ENCODE measurements at regions of chr2 and their contacts with region 1.

Region 1: DNA sequence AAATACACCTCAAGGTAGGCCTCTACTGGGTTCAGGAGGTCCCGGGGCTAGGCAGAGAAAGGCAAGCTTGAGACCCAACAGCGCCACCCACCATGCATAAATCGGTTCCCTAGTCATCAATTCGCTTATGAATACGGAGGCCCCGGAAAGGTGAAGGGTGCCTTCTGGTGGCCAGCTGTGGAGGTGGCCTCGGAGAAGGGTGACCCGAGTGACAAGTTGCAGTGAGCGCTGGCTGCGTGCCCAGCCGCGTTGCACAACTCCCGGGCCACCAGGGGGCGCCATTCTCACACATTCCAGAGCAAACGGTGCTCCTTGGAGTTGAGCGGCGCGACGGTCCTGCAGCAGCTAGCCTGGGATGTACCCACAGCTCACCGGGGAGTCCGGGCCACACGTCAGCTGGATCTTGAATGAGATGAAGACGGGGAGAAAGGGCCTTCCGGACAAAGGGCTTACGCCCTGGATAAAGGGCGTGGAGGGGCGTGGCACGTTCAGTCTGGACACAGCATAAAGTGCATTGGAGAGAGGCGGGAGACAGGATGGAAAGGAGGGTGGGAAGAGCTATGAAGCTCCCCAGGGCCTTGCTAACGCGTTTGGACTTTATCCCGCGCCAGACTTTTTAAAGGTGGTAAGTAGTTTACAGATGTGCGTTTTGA is 20.4 kb downstream of the TMSB10 start:
- DNase-seq: peak; percentile 96 to 97 (median 97)
- H3K4me3 ChIP-seq: peak overlapping the region; percentile 73 to 86
- H3K4me3 Mint-ChIP-seq: peak overlapping the region; percentile 90 to 99 (median 95)
- H3K27ac ChIP-seq: peak overlapping the region; percentile 62
- H3K27ac Mint-ChIP-seq: peak overlapping the region; percentile 91 to 99 (median 95)
- H3K4me1 ChIP-seq: peaks cover 40% of the 10 kb centered on the region
- H3K4me1 Mint-ChIP-seq: peaks cover 25 to 48% (median 36%) of the 10 kb centered on the region in 4 donors
- H3K27me3 ChIP-seq: no peaks in the 10 kb centered on the region
- H3K27me3 Mint-ChIP-seq: no peaks in the 10 kb centered on the region

Region 2: GRCh38 chr2:84526562-84526961 is 399.3 kb before region 1 on chr2:
- CTCF ChIA-PET with region 1: interaction called, 26 read pairs
- POLR2A ChIA-PET with region 1: interaction called, 10 read pairs
- intact Hi-C with region 1: loop called (anchors 1 kb)
- DNase-seq: peak in 1 of 5 donors; percentile 12
- H3K4me3 ChIP-seq: no peak overlapping the region
- H3K4me3 Mint-ChIP-seq: peak overlapping the region in 1 of 8 donors; percentile 2
- H3K27ac ChIP-seq: no peak overlapping the region
- H3K27ac Mint-ChIP-seq: peak overlapping the region in 3 of 7 donors; percentile 12 to 55 (median 22)
- H3K4me1 ChIP-seq: peaks cover 10% of the 10 kb centered on the region
- H3K4me1 Mint-ChIP-seq: peaks cover 2 to 24% (median 13%) of the 10 kb centered on the region in 4 donors
- H3K27me3 ChIP-seq: no peaks in the 10 kb centered on the region
- H3K27me3 Mint-ChIP-seq: no peaks in the 10 kb centered on the region

Region 3: GRCh38 chr2:84840306-84840705 is 85.5 kb before region 1 on chr2:
- CTCF ChIA-PET with region 1: interaction called, 7 read pairs
- POLR2A ChIA-PET with region 1: interaction called, 16 read pairs
- intact Hi-C with region 1: no loop called
- DNase-seq: peak in 1 of 5 donors; percentile 10
- H3K4me3 ChIP-seq: peak overlapping the region in 1 of 2 donors; percentile 39
- H3K4me3 Mint-ChIP-seq: peak overlapping the region; percentile 63 to 87 (median 80)
- H3K27ac ChIP-seq: peak overlapping the region; percentile 61
- H3K27ac Mint-ChIP-seq: peak overlapping the region; percentile 92 to 98 (median 96)
- H3K4me1 ChIP-seq: peaks cover 88% of the 10 kb centered on the region
- H3K4me1 Mint-ChIP-seq: peaks cover 74 to 91% (median 84%) of the 10 kb centered on the region in 4 donors
- H3K27me3 ChIP-seq: no peaks in the 10 kb centered on the region
- H3K27me3 Mint-ChIP-seq: no peaks in the 10 kb centered on the region

Region 4: DNA sequence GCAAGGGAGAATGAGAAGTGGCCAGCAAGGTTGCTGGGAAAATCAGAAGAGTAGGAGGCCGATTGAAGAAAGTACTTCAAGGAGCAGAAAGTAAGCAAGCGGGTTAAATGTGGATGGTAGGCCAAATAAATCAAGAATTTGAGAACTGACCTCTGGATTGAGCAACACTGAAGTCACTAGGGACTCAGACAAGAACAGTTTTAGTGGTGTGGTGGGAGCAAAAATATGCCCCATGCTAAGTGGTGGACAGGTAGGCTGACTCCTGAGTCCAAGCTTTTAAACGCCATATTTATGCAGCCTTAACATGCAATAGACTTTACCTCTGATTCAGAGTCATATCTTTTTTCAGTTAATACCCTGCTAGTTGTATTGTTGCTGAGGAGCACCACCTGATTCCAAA is 49.5 kb before region 1 on chr2:
- CTCF ChIA-PET with region 1: interaction called, 271 read pairs
- POLR2A ChIA-PET with region 1: interaction called, 105 read pairs
- intact Hi-C with region 1: no loop called
- DNase-seq: no peak
- H3K4me3 ChIP-seq: no peak overlapping the region
- H3K4me3 Mint-ChIP-seq: peak overlapping the region; percentile 10 to 98 (median 96)
- H3K27ac ChIP-seq: no peak overlapping the region
- H3K27ac Mint-ChIP-seq: peak overlapping the region; percentile 65 to 94 (median 84)
- H3K4me1 ChIP-seq: peaks cover 69% of the 10 kb centered on the region
- H3K4me1 Mint-ChIP-seq: peaks cover 54 to 86% (median 67%) of the 10 kb centered on the region in 4 donors
- H3K27me3 ChIP-seq: no peaks in the 10 kb centered on the region
- H3K27me3 Mint-ChIP-seq: no peaks in the 10 kb centered on the region

Region 5: GRCh38 chr2:84912984-84913383 is 12.9 kb before region 1 on chr2:
- CTCF ChIA-PET with region 1: interaction called, 267 read pairs
- POLR2A ChIA-PET with region 1: interaction called, 221 read pairs
- intact Hi-C with region 1: loop called (anchors 1 kb)
- DNase-seq: no peak
- H3K4me3 ChIP-seq: no peak overlapping the region
- H3K4me3 Mint-ChIP-seq: peak overlapping the region in 1 of 8 donors; percentile 18
- H3K27ac ChIP-seq: no peak overlapping the region
- H3K27ac Mint-ChIP-seq: peak overlapping the region in 1 of 7 donors; percentile 76
- H3K4me1 ChIP-seq: peaks cover 19% of the 10 kb centered on the region
- H3K4me1 Mint-ChIP-seq: peaks cover 20 to 29% (median 25%) of the 10 kb centered on the region in 4 donors
- H3K27me3 ChIP-seq: no peaks in the 10 kb centered on the region
- H3K27me3 Mint-ChIP-seq: no peaks in the 10 kb centered on the region

Region 6: DNA sequence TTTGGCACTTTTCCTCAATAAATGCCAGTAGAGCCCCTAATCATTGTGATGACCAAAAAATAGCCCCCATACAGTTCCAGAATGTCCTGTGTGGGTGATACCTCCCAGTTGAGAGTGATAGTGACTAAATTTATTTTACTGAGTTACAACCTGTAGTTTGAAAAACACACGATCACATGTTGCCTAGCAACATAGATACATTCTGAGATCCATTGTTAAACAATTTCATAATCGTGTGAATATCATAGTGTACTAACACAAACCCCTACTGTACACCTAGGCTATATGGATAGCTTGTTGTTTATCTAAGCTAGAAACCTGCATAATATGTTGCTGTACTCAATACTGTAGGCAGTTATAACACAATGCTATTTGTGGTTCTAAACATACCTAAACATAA is 75.7 kb after region 1 on chr2:
- CTCF ChIA-PET with region 1: interaction called, 11 read pairs
- POLR2A ChIA-PET with region 1: no interaction called
- intact Hi-C with region 1: no loop called
- DNase-seq: peak in 1 of 5 donors; percentile 13
- H3K4me3 ChIP-seq: no peak overlapping the region
- H3K4me3 Mint-ChIP-seq: peak overlapping the region in 3 of 8 donors; percentile 23 to 29 (median 28)
- H3K27ac ChIP-seq: no peak overlapping the region
- H3K27ac Mint-ChIP-seq: peak overlapping the region in 6 of 7 donors; percentile 24 to 89 (median 70)
- H3K4me1 ChIP-seq: peaks cover 44% of the 10 kb centered on the region
- H3K4me1 Mint-ChIP-seq: peaks cover 36 to 66% (median 51%) of the 10 kb centered on the region in 4 donors
- H3K27me3 ChIP-seq: no peaks in the 10 kb centered on the region
- H3K27me3 Mint-ChIP-seq: no peaks in the 10 kb centered on the region

Region 7: DNA sequence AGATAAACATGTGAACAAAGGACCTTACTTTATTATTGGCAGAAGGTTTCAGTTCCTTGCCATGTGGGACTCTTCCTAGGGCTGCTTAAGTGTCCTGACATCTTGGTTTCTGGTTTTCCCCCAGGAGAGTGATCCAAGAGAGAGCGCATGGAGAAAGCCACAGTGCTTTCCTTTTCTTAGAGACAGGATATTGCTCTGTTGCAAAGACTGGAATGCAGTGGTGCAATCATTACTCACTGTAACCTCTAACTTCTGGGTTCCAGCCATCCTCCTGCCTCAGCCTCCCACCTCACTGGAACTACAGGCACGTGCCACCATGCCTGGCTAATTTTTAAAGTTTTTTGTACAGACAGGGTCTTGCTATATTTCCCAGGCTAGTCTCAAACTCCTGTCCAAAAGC is 169.2 kb after region 1 on chr2:
- CTCF ChIA-PET with region 1: no interaction called
- POLR2A ChIA-PET with region 1: no interaction called
- intact Hi-C with region 1: no loop called
- DNase-seq: no peak
- H3K4me3 ChIP-seq: no peak overlapping the region
- H3K4me3 Mint-ChIP-seq: no peak overlapping the region
- H3K27ac ChIP-seq: no peak overlapping the region
- H3K27ac Mint-ChIP-seq: no peak overlapping the region
- H3K4me1 ChIP-seq: no peaks in the 10 kb centered on the region
- H3K4me1 Mint-ChIP-seq: no peaks in the 10 kb centered on the region
- H3K27me3 ChIP-seq: no peaks in the 10 kb centered on the region
- H3K27me3 Mint-ChIP-seq: peaks cover 14 to 16% of the 10 kb centered on the region in 2 donors

Measured in CD4-positive, alpha-beta memory T cell (primary cell).